Psoas muscle (tissue), 8 donors: ENCODE measurements at regions of chr7 and their contacts with region 1.

Region 1: DNA sequence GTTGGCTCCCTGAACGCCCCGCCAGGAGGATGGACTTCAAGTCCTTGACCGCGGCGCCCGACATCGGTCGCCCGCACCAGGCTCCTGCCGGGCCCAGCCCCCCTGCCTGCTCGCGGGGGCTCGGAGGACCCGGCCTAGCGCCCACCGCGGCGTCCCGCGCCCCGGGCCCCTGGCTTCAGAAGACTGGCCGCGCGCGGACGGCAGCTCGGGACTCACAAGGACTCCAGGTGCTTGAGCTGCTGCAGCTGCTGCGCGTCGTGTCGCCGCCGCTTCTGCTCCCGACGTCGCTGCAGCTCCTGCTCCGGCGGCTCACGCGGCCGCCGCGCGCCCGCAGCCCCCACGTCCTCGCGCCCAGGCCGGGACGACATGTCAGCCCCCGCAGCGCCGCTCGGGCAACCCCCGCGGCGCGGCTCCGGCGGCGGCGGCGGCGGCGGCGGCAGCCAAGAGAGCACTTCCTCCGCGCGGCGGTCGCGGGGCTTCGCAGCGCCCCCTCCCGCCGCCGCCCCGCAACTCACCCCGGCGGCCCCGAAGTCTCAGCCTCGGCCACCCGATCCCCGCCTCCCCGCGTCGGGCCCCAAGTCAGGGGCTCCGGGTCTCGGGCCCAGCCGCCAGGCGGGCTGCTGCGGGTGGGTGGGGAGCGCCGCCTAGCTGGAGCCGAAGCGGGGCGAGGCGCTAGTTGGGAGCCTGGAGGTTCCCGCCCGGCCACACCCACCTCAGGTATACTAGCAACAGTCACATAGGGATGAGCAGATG is at the start of gene RP9:
- DNase-seq: peak; percentile 73 to 84
- ATAC-seq: peak; percentile 90 to 95 (median 92)
- H3K4me3 ChIP-seq: peak within 1 kb of the TSS; percentile 96
- H3K27ac ChIP-seq: peak within 1 kb of the TSS; percentile 80
- H3K4me1 ChIP-seq: peaks cover 37% of the 10 kb centered on the region
- H3K27me3 ChIP-seq: no peaks in the 10 kb centered on the region
- CTCF ChIP-seq: peak; percentile 73
- total RNA-seq, gene RP9: 15.4 to 27.6 (median 16.8) TPM

Region 2: GRCh38 chr7:32774541-32774951 is 334.6 kb before region 1 on chr7:
- intact Hi-C with region 1: loop called in 1 of 2 experiments (anchors 10 kb)
- DNase-seq: no peak
- ATAC-seq: no peak
- H3K4me3 ChIP-seq: no peak overlapping the region
- H3K27ac ChIP-seq: no peak overlapping the region
- H3K4me1 ChIP-seq: no peaks in the 10 kb centered on the region
- H3K27me3 ChIP-seq: no peaks in the 10 kb centered on the region
- CTCF ChIP-seq: no peak

Region 3: GRCh38 chr7:32803406-32804141 is 305.6 kb before region 1 on chr7:
- intact Hi-C with region 1: loop called in 1 of 2 experiments (anchors 10 kb)
- DNase-seq: no peak
- ATAC-seq: no peak
- H3K4me3 ChIP-seq: no peak overlapping the region
- H3K27ac ChIP-seq: no peak overlapping the region
- H3K4me1 ChIP-seq: no peaks in the 10 kb centered on the region
- H3K27me3 ChIP-seq: no peaks in the 10 kb centered on the region
- CTCF ChIP-seq: no peak

Region 4: GRCh38 chr7:32942786-32943653 is 166.2 kb before region 1 on chr7:
- intact Hi-C with region 1: loop called in 1 of 2 experiments (anchors 10 kb)
- DNase-seq: peak; percentile 84 to 90
- ATAC-seq: peak; percentile 95 to 97 (median 96)
- H3K4me3 ChIP-seq: peak overlapping the region; percentile 78
- H3K27ac ChIP-seq: peak overlapping the region; percentile 93
- H3K4me1 ChIP-seq: peaks cover 12% of the 10 kb centered on the region
- H3K27me3 ChIP-seq: no peaks in the 10 kb centered on the region
- CTCF ChIP-seq: peak; percentile 70

Region 5: GRCh38 chr7:33062782-33063443 is 46.3 kb before region 1 on chr7:
- intact Hi-C with region 1: loop called (anchors 5 kb)
- DNase-seq: peak; percentile 92 to 96
- ATAC-seq: peak; percentile 99
- H3K4me3 ChIP-seq: peak overlapping the region; percentile 96
- H3K27ac ChIP-seq: peak overlapping the region; percentile 96
- H3K4me1 ChIP-seq: peaks cover 16% of the 10 kb centered on the region
- H3K27me3 ChIP-seq: no peaks in the 10 kb centered on the region
- CTCF ChIP-seq: no peak

Region 6: GRCh38 chr7:33733870-33734650 is 624.9 kb after region 1 on chr7:
- intact Hi-C with region 1: no loop called
- DNase-seq: peak in 1 of 2 donors; percentile 51
- ATAC-seq: peak; percentile 44 to 87 (median 64)
- H3K4me3 ChIP-seq: peak overlapping the region; percentile 19
- H3K27ac ChIP-seq: peak overlapping the region; percentile 68
- H3K4me1 ChIP-seq: peaks cover 3% of the 10 kb centered on the region
- H3K27me3 ChIP-seq: no peaks in the 10 kb centered on the region
- CTCF ChIP-seq: no peak

Region 7: DNA sequence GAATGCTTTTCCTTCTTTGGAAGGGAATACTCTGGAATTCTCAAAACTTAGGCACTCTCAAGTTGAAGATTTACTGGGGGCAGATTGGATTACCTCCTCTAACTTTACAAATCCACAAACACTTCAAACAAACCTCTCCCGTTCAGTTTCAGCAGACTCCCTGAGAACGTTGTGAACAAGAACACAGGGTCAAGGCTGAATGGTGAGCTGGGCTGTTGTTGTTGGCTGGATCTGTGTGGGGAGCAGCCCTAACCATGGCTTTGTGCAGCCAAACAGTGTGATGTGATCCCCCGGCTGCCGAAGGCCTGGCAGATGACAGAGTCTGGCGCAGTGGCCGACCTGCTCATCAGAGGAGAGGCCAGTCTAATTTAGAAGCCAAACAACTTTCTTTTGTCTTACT is 889.3 kb after region 1 on chr7:
- intact Hi-C with region 1: no loop called
- DNase-seq: peak; percentile 48 to 72
- ATAC-seq: peak in 1 of 4 donors; percentile 70
- H3K4me3 ChIP-seq: no peak overlapping the region
- H3K27ac ChIP-seq: no peak overlapping the region
- H3K4me1 ChIP-seq: no peaks in the 10 kb centered on the region
- H3K27me3 ChIP-seq: no peaks in the 10 kb centered on the region
- CTCF ChIP-seq: no peak